K562 (cell line): ENCODE measurements at regions of chr15 and their contacts with region 1.

Region 1: GRCh38 chr15:43253431-43254403 is 13.0 kb downstream of the TGM5 start:
- DNase-seq: no peak
- ATAC-seq: no peak
- H3K4me3 ChIP-seq: no peak overlapping the region
- H3K27ac ChIP-seq: no peak overlapping the region
- H3K4me1 ChIP-seq: peaks cover 7 to 14% of the 10 kb centered on the region in 2 experiments
- H3K27me3 ChIP-seq: peaks cover 0 to 18% of the 10 kb centered on the region in 2 experiments; a peak in 3 of 5 replicates
- CTCF ChIP-seq: no peak
- EP300 ChIP-seq: no peak
- POLR2A ChIP-seq: no peak
- RAD21 ChIP-seq: no peak

Region 2: DNA sequence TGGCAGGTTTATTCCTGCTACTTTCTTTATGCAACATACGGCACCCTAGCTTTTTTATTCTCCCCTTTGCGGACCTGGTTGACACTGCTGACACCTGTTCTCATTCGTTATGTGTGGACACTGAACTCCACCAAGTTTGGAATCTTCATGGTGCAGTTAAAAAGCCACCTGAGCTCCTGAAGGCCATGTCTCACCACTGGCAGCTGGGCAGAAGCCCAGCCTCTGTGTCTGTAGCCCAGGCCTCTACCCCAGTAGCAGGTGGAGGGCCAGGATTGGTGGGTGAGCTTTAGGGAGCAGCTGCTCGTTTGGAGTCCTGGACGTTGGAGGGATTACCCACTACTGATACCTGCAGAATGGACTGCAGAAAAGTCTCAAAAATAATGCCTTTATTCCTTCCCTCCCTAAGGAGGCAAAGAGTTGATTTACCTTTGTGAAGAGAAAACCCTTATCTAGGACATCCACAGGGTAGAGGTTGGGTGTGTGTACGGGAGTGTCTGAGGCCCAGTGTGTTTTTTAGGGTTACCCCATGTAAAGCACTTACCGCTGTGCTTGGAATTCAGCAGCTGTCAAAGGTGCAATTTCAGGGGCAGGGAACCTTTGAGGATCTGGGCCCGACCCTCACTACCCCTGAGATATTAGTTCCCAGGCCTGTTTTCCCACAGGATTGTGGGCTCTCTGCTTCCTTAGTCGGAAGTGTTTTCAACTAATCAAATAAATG is 69.2 kb before region 1 on chr15:
- CTCF ChIA-PET with region 1: no interaction called
- POLR2A ChIA-PET with region 1: no interaction called
- in situ Hi-C with region 1: no loop called
- intact Hi-C with region 1: no loop called
- DNase-seq: peak in 2 of 4 experiments; percentile 37 to 43
- ATAC-seq: 0 out of 3 replicates have a peak, but pooled peaks have one; percentile 1
- H3K4me3 ChIP-seq: no peak overlapping the region; the same call in 1 of the 2 replicates
- H3K27ac ChIP-seq: peak overlapping the region; percentile 47; the same call in 2 of the 3 replicates
- H3K4me1 ChIP-seq: peaks cover 12 to 15% of the 10 kb centered on the region in 2 experiments
- H3K27me3 ChIP-seq: no peaks in the 10 kb centered on the region
- CTCF ChIP-seq: no peak
- EP300 ChIP-seq: no peak
- POLR2A ChIP-seq: no peak
- RAD21 ChIP-seq: no peak

Region 3: DNA sequence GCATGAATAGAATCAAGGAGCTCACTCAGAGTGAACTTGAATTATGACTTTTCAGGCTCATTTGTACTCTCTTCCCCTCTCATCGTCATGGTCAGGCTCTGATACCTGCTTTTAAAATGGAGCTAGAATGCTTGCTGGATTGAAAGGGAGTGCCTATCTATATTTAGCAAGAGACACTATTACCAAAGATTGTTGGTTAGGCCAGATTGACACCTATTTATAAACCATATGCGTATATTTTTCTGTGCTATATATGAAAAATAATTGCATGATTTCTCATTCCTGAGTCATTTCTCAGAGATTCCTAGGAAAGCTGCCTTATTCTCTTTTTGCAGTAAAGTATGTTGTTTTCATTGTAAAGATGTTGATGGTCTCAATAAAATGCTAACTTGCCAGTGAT is 58.9 kb before region 1 on chr15:
- CTCF ChIA-PET with region 1: no interaction called
- POLR2A ChIA-PET with region 1: no interaction called
- in situ Hi-C with region 1: no loop called
- intact Hi-C with region 1: loop called (anchors 2 kb)
- DNase-seq: no peak
- ATAC-seq: no peak
- H3K4me3 ChIP-seq: no peak overlapping the region
- H3K27ac ChIP-seq: no peak overlapping the region
- H3K4me1 ChIP-seq: no peaks in the 10 kb centered on the region
- H3K27me3 ChIP-seq: no peaks in the 10 kb centered on the region
- CTCF ChIP-seq: no peak
- EP300 ChIP-seq: no peak
- POLR2A ChIP-seq: no peak
- RAD21 ChIP-seq: no peak

Region 4: GRCh38 chr15:43219929-43220928 is 33.5 kb before region 1 on chr15:
- CTCF ChIA-PET with region 1: no interaction called
- POLR2A ChIA-PET with region 1: no interaction called
- in situ Hi-C with region 1: no loop called
- intact Hi-C with region 1: no loop called
- DNase-seq: peak in 3 of 4 experiments; percentile 56 to 71 (median 70)
- ATAC-seq: peak; percentile 75
- H3K4me3 ChIP-seq: 0 out of 2 replicates have a peak overlapping the region, but pooled peaks have one; percentile 6
- H3K27ac ChIP-seq: peak overlapping the region; percentile 78
- H3K4me1 ChIP-seq: peaks cover 26 to 32% of the 10 kb centered on the region in 2 experiments; a peak in 4 of 5 replicates
- H3K27me3 ChIP-seq: no peaks in the 10 kb centered on the region
- CTCF ChIP-seq: no peak
- EP300 ChIP-seq: no peak
- POLR2A ChIP-seq: no peak
- RAD21 ChIP-seq: no peak

Region 5: GRCh38 chr15:43274136-43274535 is 20.4 kb after region 1 on chr15:
- CTCF ChIA-PET with region 1: no interaction called
- POLR2A ChIA-PET with region 1: no interaction called
- in situ Hi-C with region 1: no loop called
- intact Hi-C with region 1: no loop called
- DNase-seq: no peak
- ATAC-seq: no peak
- H3K4me3 ChIP-seq: no peak overlapping the region
- H3K27ac ChIP-seq: no peak overlapping the region
- H3K4me1 ChIP-seq: no peaks in the 10 kb centered on the region
- H3K27me3 ChIP-seq: peaks cover 45 to 62% of the 10 kb centered on the region in 2 experiments; a peak in 4 of 5 replicates
- CTCF ChIP-seq: no peak
- EP300 ChIP-seq: no peak
- POLR2A ChIP-seq: no peak
- RAD21 ChIP-seq: no peak

Region 6: DNA sequence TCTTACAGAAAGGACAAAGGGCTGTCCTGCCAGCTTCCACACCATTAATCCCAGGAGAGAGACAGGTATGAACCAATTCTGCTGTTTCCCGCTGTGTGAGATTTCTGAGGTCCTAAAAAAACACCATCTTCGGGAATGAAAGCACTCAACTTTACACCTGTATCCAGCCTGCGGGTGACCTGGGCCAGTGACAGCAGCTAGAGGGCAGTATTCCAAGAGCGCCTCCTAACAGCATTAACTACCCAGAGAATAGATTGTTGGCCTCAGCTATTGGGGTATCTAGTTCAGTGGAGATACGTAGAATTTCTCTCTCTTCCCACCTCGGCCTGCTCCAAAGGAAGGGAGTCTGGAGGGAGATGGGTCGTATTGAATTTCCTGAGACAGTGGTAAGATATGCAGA is 628.2 kb after region 1 on chr15:
- CTCF ChIA-PET with region 1: no interaction called
- POLR2A ChIA-PET with region 1: no interaction called
- in situ Hi-C with region 1: no loop called
- intact Hi-C with region 1: no loop called
- DNase-seq: peak in 3 of 4 experiments; percentile 34 to 55 (median 41)
- ATAC-seq: peak; percentile 81
- H3K4me3 ChIP-seq: no peak overlapping the region
- H3K27ac ChIP-seq: no peak overlapping the region
- H3K4me1 ChIP-seq: no peaks in the 10 kb centered on the region
- H3K27me3 ChIP-seq: no peaks in the 10 kb centered on the region
- CTCF ChIP-seq: peak; percentile 62 to 71 (median 69)
- EP300 ChIP-seq: no peak
- POLR2A ChIP-seq: no peak
- RAD21 ChIP-seq: no peak